ENCODE measurements at regions of chr5 and their contacts with region 1.

Region 1: DNA sequence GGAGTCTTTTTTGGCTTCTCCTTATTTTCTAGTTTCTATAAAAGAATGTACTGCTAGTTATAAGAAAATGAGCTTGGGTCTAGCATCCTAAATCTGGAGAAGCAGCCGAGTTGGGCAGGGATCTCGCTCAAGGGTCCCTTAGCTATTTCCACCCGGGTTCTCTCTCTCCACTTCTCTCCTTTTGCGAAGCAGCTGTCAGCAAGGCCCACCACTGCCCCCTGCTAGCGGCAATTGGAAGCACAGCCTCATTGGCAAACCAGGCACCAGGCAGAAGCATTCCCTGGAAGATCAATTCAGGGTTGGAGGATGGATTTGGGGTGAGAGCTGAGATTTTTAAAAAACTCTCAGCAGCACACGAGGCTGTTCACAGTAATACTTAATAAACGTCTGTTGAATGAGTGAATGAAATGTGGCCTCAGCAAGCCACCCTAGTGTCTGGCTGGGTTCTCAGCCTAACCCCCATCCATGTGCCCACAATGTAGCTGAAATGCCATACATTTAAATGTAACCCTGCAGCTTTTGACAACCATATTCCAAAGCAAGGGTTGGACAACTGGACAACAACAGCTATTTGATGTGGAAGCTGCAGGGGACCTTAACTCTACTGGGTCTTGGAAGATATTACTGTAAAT is 34.6 kb upstream of the TNIP1 start:
- DNase-seq: no peak
- H3K4me3 ChIP-seq: no peak overlapping the region
- H3K27ac ChIP-seq: no peak overlapping the region
- H3K27me3 ChIP-seq: no peaks in the 10 kb centered on the region
- CTCF ChIP-seq: peak; percentile 100

Region 2: DNA sequence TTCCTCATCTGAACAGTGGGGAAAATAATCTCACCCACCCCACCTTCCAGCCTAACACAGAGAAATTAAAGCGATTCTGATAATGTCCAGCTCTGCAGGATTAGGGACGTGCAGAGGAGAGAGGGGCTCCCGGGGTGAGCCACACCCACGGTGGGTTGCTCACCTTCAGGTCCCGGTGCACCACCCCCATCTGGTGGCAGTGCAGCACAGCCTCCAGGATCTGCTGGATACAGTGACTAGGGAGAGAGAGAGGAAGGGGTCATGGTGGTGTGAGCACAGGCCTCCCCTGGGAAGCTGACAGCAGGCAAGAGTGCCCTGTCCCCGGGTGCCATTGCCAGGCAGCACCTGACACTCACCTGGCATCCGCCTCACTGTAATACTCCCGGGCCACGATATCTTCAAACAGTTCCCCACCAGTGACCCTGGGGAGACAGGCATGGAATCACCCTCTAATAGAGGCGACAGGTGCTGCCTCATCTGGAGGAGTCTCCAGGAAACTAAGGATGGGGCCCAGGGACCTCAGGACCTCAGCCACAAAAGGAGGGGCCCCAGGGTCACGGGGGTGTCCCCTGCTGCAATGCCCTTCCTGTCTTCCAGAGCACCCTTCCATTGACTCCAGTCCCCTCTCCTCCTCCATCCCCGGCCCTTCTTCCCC is 858.9 kb before region 1 on chr5:
- CTCF ChIA-PET with region 1: no interaction called
- POLR2A ChIA-PET with region 1: no interaction called
- DNase-seq: no peak
- H3K4me3 ChIP-seq: no peak overlapping the region
- H3K27ac ChIP-seq: no peak overlapping the region
- H3K27me3 ChIP-seq: no peaks in the 10 kb centered on the region
- CTCF ChIP-seq: 0 out of 2 replicates have a peak, but pooled peaks have one; percentile 23

Region 3: GRCh38 chr5:151051066-151051930 is 64.1 kb before region 1 on chr5:
- CTCF ChIA-PET with region 1: interaction called, 526 read pairs
- POLR2A ChIA-PET with region 1: interaction called, 4 read pairs
- DNase-seq: peak; percentile 43
- H3K4me3 ChIP-seq: no peak overlapping the region
- H3K27ac ChIP-seq: no peak overlapping the region
- H3K27me3 ChIP-seq: no peaks in the 10 kb centered on the region
- CTCF ChIP-seq: peak; percentile 95

Region 4: DNA sequence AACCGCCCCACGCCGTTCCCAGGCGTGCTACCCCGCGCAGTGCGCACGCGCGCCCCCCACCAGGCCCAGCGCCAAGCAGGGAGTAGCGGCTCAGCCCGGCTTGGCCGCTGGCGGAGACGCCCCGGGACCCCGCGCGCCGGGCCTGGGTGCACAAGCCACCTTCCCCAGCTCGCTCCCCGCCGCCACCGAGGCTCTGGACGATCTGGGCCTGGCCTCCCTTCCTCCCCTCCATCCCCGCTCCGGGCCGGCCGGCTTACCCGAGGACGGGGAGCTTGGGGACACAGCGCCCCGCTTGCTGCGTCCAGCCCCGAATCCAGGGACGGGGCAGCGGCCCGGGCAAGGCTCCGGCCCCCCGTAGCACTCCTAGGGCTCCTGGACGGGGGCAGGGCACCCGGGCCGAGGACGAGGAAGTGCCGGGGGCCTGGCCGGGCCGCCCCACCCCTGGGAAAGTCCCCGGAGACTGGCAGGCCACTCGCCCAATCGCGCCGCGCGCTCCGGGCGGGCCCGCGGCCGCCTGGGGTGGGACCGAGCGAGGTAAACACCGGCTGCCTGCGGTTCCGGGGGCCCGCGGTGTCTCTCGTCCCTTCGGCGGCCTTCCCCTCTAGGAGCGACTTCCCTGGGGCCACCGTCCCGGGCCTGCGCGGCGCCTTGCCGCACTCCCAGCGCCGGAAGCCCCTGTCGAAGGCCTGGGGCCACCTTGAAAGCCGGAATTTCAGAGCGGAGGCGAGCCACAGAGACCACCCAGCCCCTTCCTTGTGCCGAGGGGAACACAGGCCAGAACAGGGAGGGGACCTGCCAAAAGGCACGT is 34.6 kb before region 1 on chr5 and contains the start of gene TNIP1:
- CTCF ChIA-PET with region 1: interaction called, 12 read pairs
- POLR2A ChIA-PET with region 1: no interaction called
- DNase-seq: no peak
- H3K4me3 ChIP-seq: peak within 1 kb of the TSS; percentile 82
- H3K27ac ChIP-seq: peak within 1 kb of the TSS; percentile 90
- H3K27me3 ChIP-seq: no peaks in the 10 kb centered on the region
- CTCF ChIP-seq: no peak
- polyA plus RNA-seq, gene TNIP1: 42.6 and 49.2 TPM in 2 replicates

Region 5: DNA sequence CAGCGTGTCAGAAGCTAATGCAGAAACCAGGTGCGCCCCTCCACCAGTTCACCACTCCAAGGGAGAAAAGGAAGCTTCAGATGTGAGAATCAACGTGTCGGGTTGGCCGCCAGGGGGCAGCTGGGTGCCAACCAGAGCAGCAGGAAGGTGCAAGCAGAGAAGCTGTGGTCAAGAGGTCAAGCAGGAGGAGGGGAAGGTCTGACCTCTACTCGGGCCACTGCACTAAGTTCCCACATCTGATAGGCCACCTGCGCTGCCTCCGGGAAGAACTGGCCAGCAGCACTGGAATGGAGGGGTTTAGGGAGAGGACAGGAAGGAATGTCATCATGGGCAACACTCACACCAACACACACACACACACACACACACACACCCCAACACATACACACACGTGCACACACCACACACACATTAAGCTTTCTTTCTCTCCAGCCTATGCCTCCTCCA is 10.8 kb after region 1 on chr5:
- CTCF ChIA-PET with region 1: interaction called, 99 read pairs
- POLR2A ChIA-PET with region 1: no interaction called
- DNase-seq: no peak
- H3K4me3 ChIP-seq: no peak overlapping the region
- H3K27ac ChIP-seq: no peak overlapping the region
- H3K27me3 ChIP-seq: no peaks in the 10 kb centered on the region
- CTCF ChIP-seq: peak; percentile 69

Region 6: DNA sequence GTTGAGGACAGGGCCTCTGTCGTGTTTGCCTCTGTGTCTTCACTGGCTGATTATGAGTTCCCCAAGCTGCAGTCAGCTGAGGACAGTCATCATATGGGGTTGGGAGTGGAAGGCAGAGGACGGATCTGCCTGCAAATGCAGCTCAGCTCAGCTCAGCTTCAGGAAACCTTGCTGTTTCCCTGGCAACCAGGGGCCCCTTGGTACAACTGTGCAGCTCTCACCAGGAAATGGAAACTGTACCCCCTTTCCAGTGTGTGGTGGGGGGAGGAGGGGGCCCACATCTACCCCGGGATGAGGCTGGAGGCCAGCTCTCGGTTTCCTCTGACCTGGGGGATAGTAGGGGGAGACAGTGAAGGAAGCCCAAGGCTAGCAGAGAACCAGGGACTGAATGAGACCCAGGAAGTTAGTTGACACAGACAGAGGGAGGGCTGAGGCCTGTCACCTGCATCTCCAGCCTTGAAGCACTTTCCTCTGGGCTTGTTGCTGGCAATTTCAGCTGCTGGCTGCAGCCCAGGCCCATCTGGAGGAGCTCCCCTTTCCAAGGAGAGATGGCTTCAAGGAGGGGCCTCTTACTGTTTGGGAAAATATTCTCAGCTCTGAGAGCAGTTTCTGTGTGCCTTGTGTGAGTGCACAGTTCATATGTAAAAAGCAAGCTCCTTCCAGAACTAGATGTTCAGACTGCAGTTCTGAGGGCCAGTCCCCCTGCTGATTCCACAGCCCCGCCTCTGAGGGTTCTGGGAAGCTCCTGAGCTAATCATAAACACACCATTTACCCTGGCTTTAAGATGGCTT is 35.3 kb after region 1 on chr5:
- CTCF ChIA-PET with region 1: interaction called, 16 read pairs
- POLR2A ChIA-PET with region 1: interaction called, 5 read pairs
- DNase-seq: no peak
- H3K4me3 ChIP-seq: no peak overlapping the region
- H3K27ac ChIP-seq: peak overlapping the region; percentile 73
- H3K27me3 ChIP-seq: no peaks in the 10 kb centered on the region
- CTCF ChIP-seq: no peak

Region 7: DNA sequence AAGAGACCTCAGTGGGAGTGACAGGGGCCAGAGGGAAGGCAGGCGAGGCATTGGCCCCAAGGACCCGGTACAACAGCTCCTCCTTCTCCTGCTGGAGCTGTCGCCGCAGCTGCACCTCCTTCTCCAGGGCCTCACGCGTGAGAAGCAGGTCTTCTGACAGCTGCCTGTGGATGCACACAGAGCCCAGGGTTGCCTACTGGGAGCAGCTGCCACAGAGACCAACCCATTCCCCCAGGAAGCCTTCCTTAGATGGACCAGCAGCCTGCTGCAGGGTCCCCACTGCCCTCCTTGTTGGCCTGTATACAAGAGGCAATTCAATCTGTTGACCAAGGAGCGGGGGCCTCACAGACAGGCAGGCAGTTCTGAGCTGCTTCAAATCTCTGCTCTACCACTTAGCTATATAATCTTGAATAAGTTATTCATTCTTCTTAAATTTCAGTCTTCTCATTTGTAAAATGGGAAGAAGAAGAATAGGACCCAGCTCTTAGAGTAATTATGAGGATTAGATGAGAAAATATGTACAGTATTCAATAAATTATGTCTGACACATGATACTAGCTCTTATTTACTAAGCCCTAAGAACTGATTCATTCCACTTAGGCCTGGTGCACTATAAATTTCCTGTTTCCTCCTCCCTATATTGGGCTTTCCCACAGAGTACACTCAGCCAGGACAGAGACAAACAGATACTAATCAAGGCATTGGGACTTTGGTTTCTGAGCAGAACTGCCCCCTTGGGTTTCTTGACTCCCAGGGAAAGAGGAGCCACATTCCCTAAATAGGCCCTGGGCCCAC is 68.3 kb after region 1 on chr5:
- CTCF ChIA-PET with region 1: no interaction called
- POLR2A ChIA-PET with region 1: no interaction called
- DNase-seq: no peak
- H3K4me3 ChIP-seq: no peak overlapping the region
- H3K27ac ChIP-seq: no peak overlapping the region
- H3K27me3 ChIP-seq: peaks cover 9% of the 10 kb centered on the region
- CTCF ChIP-seq: no peak

Region 8: GRCh38 chr5:151239237-151239861 is 124.0 kb after region 1 on chr5:
- CTCF ChIA-PET with region 1: interaction called, 16 read pairs
- POLR2A ChIA-PET with region 1: no interaction called
- DNase-seq: no peak
- H3K4me3 ChIP-seq: no peak overlapping the region
- H3K27ac ChIP-seq: no peak overlapping the region
- H3K27me3 ChIP-seq: peaks cover 17% of the 10 kb centered on the region
- CTCF ChIP-seq: peak; percentile 77

Measured in AG04450 (cell line).